Left cardiac atrium (tissue), 4 donors: ENCODE measurements at regions of chr2 and their contacts with region 1.

Region 1: GRCh38 chr2:217886720-217887309 is 116.0 kb downstream of the TNS1 start:
- DNase-seq: peak; percentile 81
- ATAC-seq: peak; percentile 30 to 33

Region 2: DNA sequence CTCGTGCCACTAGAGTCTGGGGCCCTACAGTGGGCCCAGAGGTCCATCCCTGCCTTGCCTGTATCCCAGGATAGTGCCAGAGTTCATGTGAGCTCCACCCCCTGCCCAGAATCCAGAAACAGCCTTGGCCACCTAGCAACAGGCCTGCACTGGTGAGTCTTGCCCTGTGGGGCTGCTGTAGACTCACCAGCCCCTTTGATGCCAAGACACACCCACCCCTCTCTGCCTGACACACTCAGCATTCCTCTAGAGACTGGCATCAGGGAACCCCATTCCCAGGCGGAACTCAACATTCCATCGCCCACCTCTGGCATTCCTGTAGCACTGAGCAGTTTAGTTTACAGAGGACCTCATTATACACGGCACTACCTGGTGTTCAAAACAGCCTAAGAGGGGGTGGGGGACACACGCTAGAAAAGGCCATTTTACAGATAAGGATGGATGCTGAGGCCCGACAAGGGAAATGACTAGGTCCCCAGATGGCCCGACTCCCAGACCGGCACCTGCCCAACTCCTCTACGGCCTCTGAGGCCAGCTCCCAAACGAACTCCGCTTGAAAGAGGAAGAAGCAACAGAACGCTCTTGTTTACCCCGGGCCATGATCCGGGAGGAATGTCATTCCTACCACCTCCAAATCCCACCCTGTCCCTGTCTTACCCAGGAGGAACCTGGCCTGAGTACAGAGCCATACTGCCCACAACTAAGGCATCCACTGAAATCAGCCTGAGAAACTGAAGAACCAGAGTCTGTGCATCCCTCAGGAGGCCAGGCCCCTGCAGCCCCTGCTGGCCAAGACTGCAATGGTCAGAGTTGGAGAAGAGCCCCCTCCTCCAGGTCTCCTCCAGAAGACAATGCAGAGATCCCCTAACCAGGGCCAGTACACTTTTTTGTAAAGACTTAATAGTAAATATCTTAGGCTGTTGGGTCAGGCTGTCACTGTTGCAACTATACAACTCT is 64.2 kb before region 1 on chr2:
- intact Hi-C with region 1: no loop called
- DNase-seq: no peak
- ATAC-seq: peak in 1 of 2 donors; percentile 47

Region 3: GRCh38 chr2:217928324-217929181 is 41.7 kb after region 1 on chr2:
- intact Hi-C with region 1: loop called in 1 of 2 experiments (anchors 5 kb)
- DNase-seq: peak; percentile 67
- ATAC-seq: peak; percentile 14 to 36

Region 4: DNA sequence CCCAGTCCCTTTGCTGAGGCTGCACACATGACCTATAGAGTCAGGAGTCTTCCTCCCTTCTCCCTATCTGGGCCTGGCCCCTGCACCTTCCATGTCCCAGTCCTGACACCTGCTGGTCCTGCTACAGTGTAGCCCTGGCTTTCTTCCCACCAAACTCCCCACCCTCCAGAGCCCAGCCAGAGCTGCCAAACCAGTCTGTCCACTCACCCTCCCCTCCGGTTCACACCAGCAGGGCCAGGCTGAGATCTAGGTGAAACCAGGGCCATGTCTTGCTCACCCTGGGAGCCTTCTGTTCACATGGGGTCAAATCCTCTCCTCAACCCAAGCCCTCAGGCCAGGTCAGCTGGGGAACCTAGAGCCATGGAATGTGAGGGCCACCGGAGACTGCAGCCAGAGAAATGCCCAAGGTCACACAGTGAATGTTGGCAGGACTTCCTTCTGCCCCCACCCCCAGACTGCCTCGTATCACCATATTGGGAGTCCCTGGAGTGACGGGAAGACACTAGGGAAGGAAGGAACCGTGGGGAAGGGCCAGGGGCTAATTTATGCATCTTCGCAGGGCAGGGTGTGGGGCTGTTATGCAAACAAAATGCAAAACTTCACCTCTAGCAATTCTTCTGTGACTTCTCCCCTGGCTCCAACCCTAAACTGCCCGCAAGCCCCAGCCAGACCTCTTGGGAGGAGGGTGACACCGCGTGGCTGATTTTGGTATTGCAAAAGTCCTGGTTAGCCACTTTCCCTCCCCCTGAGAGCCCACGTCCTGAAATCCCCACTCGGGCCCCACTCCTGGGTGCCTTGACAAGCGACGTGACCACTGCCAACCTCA is 101.4 kb after region 1 on chr2:
- intact Hi-C with region 1: loop called (anchors 5 kb)
- DNase-seq: peak; percentile 87
- ATAC-seq: peak; percentile 84

Region 5: DNA sequence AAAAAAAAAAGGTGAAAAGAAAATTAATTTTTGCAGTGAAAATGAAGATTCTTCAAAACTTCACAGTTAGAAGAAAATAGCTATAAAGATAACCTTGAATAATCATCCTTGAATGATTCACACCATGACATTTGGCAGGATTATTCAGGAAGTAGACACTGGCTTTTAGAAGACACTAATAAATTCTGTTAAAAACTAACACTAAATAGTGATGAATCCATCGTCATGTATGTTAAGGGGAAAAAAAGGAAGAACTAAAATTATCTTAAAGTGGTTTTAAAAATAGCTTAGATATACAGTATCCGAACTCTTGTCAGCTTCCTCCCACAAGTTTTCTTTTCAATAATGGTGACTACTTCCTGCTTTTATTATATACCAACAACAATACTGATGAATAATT is 671.1 kb after region 1 on chr2:
- intact Hi-C with region 1: no loop called
- DNase-seq: no peak
- ATAC-seq: no peak